ENCODE measurements at regions of chr18 and their contacts with region 1.

Region 1: GRCh38 chr18:5979971-5980457 is 84.7 kb upstream of the TMEM200C start:
- DNase-seq: peak in 2 of 5 donors; percentile 63 to 71
- ATAC-seq: peak; percentile 60 to 88 (median 86)
- H3K4me3 ChIP-seq: no peak overlapping the region
- H3K27ac ChIP-seq: no peak overlapping the region
- H3K4me1 ChIP-seq: peaks cover 0 to 9% (median 0%) of the 10 kb centered on the region in 12 donors
- H3K27me3 ChIP-seq: no peaks in the 10 kb centered on the region
- CTCF ChIP-seq: no peak
- POLR2A ChIP-seq: no peak

Region 2: GRCh38 chr18:6056146-6056932 is 76.3 kb after region 1 on chr18:
- intact Hi-C with region 1: loop called in 4 of 10 experiments (anchors 2 to 10 kb)
- DNase-seq: no peak
- ATAC-seq: peak in 1 of 4 donors; percentile 20
- H3K4me3 ChIP-seq: no peak overlapping the region
- H3K27ac ChIP-seq: peak overlapping the region in 8 of 12 donors; percentile 19 to 67 (median 36)
- H3K4me1 ChIP-seq: peaks cover 0 to 43% (median 10%) of the 10 kb centered on the region in 12 donors
- H3K27me3 ChIP-seq: no peaks in the 10 kb centered on the region
- CTCF ChIP-seq: no peak
- POLR2A ChIP-seq: no peak

Region 3: DNA sequence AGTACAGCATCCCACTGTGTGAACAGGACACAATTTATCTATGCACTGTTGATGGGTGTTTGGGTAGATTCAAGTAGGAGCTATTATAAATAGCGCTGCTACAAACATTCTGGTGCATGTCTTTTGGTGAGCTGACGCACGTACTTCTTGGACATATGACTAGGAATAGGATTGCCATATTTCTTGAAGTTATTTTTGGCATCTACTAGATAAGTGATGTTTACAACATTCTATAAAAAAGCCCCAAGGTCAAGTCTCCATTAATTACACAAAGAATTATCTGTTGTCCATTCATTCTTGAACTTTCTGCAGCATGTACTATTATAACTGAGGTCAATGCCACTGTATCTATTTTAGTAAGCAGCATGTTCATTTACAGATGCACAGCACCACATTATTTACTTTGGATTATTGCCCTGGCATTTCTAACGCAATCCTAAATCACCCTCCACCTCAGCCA is 140.8 kb after region 1 on chr18:
- intact Hi-C with region 1: loop called in 1 of 10 experiments (anchors 10 kb)
- DNase-seq: peak in 1 of 5 donors; percentile 40
- ATAC-seq: peak; percentile 96 to 98 (median 97)
- H3K4me3 ChIP-seq: no peak overlapping the region
- H3K27ac ChIP-seq: peak overlapping the region in 8 of 12 donors; percentile 24 to 85 (median 58)
- H3K4me1 ChIP-seq: peaks cover 0 to 28% (median 11%) of the 10 kb centered on the region in 12 donors
- H3K27me3 ChIP-seq: no peaks in the 10 kb centered on the region
- CTCF ChIP-seq: no peak
- POLR2A ChIP-seq: no peak

Region 4: DNA sequence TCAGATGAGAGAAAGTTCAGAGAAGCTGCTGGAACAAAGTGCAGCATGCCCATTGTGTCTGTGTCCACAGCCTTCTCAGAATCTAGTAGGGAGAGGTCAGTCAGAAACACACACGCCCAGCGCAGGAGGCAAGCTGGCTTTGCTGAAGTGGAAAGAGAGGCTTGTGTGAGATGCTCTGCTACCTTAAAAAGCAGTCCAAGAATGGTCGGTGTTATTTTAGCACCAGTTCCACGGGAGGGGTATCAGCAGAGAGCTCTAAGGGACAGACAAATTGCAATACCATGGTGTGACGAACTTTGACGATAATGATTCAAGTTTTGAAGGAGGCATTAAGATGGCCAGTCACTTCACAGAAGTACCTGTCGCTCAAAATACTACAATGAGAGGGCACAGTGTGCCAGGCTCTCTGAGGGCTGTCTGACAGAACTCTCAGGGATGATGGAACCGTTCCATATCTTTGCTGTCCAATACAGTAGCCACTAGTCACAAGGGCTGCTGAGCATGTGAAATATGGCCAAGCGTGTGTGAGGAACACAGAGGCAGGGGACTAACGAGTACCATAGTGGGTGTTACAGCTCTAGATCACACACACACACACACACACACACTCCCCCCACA is 152.8 kb after region 1 on chr18:
- intact Hi-C with region 1: loop called in 4 of 10 experiments (anchors 5 to 10 kb)
- DNase-seq: peak in 4 of 5 donors; percentile 33 to 65 (median 44)
- ATAC-seq: peak; percentile 94 to 98 (median 96)
- H3K4me3 ChIP-seq: no peak overlapping the region
- H3K27ac ChIP-seq: peak overlapping the region in 2 of 12 donors; percentile 60 to 63
- H3K4me1 ChIP-seq: peaks cover 0 to 16% (median 0%) of the 10 kb centered on the region in 12 donors
- H3K27me3 ChIP-seq: no peaks in the 10 kb centered on the region
- CTCF ChIP-seq: no peak
- POLR2A ChIP-seq: no peak

Measured in heart left ventricle (tissue), 16 donors.